Breast epithelium (tissue), 4 donors: ENCODE measurements at regions of chr10 and their contacts with region 1.

Region 1: GRCh38 chr10:116272440-116273283 is at the start of gene GFRA1:
- DNase-seq: peak in 1 of 2 donors; percentile 58
- H3K4me3 ChIP-seq: peak within 1 kb of the TSS; percentile 60 to 70 (median 64)
- H3K27ac ChIP-seq: peak within 1 kb of the TSS; percentile 42 to 80
- H3K4me1 ChIP-seq: peaks cover 0 to 11% of the 10 kb centered on the region in 2 donors
- H3K27me3 ChIP-seq: peaks cover 0 to 45% of the 10 kb centered on the region in 2 donors
- CTCF ChIP-seq: peak in 1 of 3 donors; percentile 52
- POLR2A ChIP-seq: no peak
- total RNA-seq, gene GFRA1: 88.2 to 153 (median 98.5) TPM

Region 2: GRCh38 chr10:115879372-115880044 is 393.2 kb before region 1 on chr10:
- intact Hi-C with region 1: loop called (anchors 5 kb)
- DNase-seq: no peak
- H3K4me3 ChIP-seq: no peak overlapping the region
- H3K27ac ChIP-seq: no peak overlapping the region
- H3K4me1 ChIP-seq: no peaks in the 10 kb centered on the region
- H3K27me3 ChIP-seq: no peaks in the 10 kb centered on the region
- CTCF ChIP-seq: no peak
- POLR2A ChIP-seq: no peak

Region 3: GRCh38 chr10:116247701-116248100 is 25.0 kb before region 1 on chr10:
- intact Hi-C with region 1: no loop called
- DNase-seq: no peak
- H3K4me3 ChIP-seq: no peak overlapping the region
- H3K27ac ChIP-seq: no peak overlapping the region
- H3K4me1 ChIP-seq: no peaks in the 10 kb centered on the region
- H3K27me3 ChIP-seq: no peaks in the 10 kb centered on the region
- CTCF ChIP-seq: no peak
- POLR2A ChIP-seq: no peak